MCF 10A (cell line): ENCODE measurements at regions of chr7 and their contacts with region 1.

Region 1: DNA sequence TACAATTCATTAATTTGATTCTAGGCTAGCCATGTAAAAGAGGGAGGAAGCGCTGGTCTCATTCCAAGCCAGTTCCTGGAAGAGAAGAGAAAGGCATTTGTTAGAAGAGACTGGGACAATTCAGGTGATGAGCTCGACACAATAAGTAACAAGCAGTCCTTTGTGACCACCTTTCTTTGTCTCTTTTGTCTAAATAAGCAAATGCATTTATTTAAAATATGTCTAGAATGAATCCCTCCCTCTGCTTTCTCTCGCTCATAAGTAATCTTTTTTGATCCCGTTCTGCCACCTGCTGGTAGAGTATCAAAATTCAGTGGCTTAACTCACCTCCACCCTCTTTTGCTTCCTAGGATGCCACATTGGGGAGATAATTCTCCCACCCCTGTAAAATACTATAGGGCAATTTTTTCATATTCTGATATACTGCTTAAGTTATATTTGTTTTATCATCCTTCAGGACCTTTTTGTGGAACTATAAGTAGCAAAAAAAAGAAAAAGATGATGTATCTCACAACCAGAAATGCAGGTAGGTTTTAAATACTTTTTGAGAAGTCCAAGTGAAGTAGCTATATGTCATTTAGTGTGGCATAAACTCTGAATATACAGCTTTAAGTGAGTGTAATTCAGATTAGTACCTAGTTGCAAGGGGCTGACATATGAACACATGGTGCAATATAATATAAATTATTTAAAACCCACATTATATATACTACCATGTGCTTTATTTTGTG is 91.5 kb downstream of the GSDME start:
- DNase-seq: peak; percentile 68
- H3K4me3 Mint-ChIP-seq: no peak overlapping the region
- H3K27ac Mint-ChIP-seq: no peak overlapping the region
- H3K4me1 Mint-ChIP-seq: peaks cover 21% of the 10 kb centered on the region
- H3K27me3 Mint-ChIP-seq: no peaks in the 10 kb centered on the region
- CTCF ChIP-seq: peak; percentile 63

Region 2: DNA sequence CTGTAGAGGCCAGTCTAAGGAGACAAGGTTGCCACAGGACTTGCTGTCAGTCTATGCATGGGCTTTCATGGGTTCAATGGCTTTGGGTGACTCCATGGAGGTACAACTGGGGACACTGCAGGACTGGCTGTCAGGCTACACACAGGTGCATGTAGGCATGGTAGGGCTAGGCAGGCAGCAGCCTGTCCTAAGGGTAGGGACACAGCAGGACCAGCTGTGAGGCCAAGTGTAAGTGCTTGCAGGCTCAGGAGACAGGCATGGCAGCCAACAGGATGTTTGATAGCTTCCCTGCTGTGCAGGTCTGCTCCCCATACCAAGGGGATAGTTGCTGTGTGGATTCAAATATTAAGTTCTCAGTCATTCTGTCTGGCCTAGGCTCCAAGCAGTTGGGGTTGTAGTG is 562.7 kb before region 1 on chr7:
- CTCF ChIA-PET with region 1: no interaction called
- POLR2A ChIA-PET with region 1: no interaction called
- intact Hi-C with region 1: no loop called
- DNase-seq: no peak
- H3K4me3 Mint-ChIP-seq: no peak overlapping the region
- H3K27ac Mint-ChIP-seq: no peak overlapping the region
- H3K4me1 Mint-ChIP-seq: no peaks in the 10 kb centered on the region
- H3K27me3 Mint-ChIP-seq: no peaks in the 10 kb centered on the region
- CTCF ChIP-seq: no peak

Region 3: DNA sequence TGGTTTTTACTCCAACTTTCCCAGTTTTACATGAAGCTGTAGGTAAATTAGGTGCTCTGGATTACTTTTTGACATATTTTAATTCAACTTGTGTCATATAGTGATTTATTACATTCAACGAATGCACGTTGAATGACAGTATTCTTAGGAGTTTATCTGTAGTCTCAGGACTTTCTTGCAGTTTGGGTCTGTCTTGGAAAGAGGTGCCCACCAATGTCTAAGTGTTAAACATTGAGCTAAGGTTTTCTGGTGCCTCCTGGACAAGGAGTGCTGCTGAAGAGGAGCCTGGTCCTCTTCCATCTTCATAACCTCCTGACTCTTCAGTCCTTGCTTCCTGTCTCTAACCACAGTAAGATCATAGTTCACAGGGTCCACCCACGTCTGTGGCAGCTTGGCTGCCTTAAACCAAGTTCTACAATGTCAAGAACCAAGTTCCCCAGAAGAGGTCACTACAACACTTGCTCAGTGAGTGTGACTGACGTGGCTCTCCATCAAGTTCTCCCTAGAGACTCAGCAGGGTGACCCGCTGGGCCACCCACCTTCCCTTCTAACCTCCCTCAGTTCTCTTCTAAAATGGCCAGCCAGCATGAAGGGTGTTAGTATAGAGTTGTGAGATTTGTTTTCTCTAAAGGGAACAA is 375.6 kb before region 1 on chr7:
- CTCF ChIA-PET with region 1: interaction called, 6 read pairs
- POLR2A ChIA-PET with region 1: no interaction called
- intact Hi-C with region 1: loop called (anchors 1 kb)
- DNase-seq: peak; percentile 74
- H3K4me3 Mint-ChIP-seq: no peak overlapping the region
- H3K27ac Mint-ChIP-seq: no peak overlapping the region
- H3K4me1 Mint-ChIP-seq: peaks cover 6% of the 10 kb centered on the region
- H3K27me3 Mint-ChIP-seq: peaks cover 14% of the 10 kb centered on the region
- CTCF ChIP-seq: peak; percentile 64

Region 4: DNA sequence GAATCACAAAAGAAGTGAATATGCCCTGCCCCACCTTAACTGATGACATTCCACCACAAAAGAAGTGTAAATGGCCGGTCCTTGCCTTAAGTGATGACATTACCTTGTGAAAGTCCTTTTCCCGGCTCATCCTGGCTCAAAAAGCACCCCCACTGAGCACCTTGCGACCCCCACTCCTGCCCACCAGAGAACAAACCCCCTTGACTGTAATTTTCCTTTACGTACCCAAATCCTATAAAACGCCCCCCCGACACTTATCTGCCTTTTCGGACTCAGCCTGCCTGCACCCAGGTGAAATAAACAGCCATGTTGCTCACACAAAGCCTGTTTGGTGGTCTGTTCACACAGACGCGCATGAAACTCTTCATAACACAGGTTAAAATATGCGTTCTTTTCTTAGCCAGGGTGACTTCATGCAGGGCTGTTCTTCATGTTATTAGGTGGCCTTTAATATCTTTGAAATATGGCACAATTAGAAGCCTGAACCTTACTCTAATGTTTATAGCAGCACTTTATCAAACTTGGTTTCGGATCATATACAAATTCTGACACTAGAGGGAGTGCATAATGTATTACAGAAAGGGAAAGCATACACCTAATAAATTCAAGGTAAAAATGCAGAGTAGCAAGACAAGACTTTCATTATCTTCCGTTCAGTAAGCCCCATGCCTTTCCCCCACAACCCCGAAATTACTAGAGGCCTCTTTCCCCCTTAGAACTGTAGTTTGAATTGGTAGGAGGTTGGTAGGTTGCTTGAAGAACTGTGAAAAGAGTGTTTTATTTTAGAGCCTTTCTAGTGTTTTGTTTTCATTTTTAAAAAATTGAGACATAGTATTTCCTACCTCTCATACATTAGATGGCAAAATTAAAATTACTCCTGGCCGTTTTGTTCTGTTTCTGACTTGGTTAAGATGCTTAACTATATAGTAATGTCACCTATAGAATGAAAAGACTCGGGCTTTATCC is 263.8 kb before region 1 on chr7:
- CTCF ChIA-PET with region 1: interaction called, 8 read pairs
- POLR2A ChIA-PET with region 1: no interaction called
- intact Hi-C with region 1: loop called (anchors 1 kb)
- DNase-seq: peak; percentile 39
- H3K4me3 Mint-ChIP-seq: peak overlapping the region; percentile 43
- H3K27ac Mint-ChIP-seq: no peak overlapping the region
- H3K4me1 Mint-ChIP-seq: peaks cover 15% of the 10 kb centered on the region
- H3K27me3 Mint-ChIP-seq: no peaks in the 10 kb centered on the region
- CTCF ChIP-seq: peak; percentile 32

Region 5: GRCh38 chr7:24510759-24511158 is 155.0 kb before region 1 on chr7:
- CTCF ChIA-PET with region 1: no interaction called
- POLR2A ChIA-PET with region 1: no interaction called
- intact Hi-C with region 1: no loop called
- DNase-seq: no peak
- H3K4me3 Mint-ChIP-seq: no peak overlapping the region
- H3K27ac Mint-ChIP-seq: no peak overlapping the region
- H3K4me1 Mint-ChIP-seq: no peaks in the 10 kb centered on the region
- H3K27me3 Mint-ChIP-seq: peaks cover 54% of the 10 kb centered on the region
- CTCF ChIP-seq: no peak

Region 6: GRCh38 chr7:25158966-25159365 is 493.2 kb after region 1 on chr7:
- CTCF ChIA-PET with region 1: no interaction called
- POLR2A ChIA-PET with region 1: no interaction called
- intact Hi-C with region 1: no loop called
- DNase-seq: no peak
- H3K4me3 Mint-ChIP-seq: no peak overlapping the region
- H3K27ac Mint-ChIP-seq: no peak overlapping the region
- H3K4me1 Mint-ChIP-seq: peaks cover 5% of the 10 kb centered on the region
- H3K27me3 Mint-ChIP-seq: no peaks in the 10 kb centered on the region
- CTCF ChIP-seq: no peak